Activated CD8-positive, alpha-beta memory T cell treated with anti-CD3 and anti-CD28 coated beads, Interleukin-2, amount 10 ng/mL, durations not matched to agents 7 days and 5 days (primary cell): ENCODE measurements at regions of chr4 and their contacts with region 1.

Region 1: DNA sequence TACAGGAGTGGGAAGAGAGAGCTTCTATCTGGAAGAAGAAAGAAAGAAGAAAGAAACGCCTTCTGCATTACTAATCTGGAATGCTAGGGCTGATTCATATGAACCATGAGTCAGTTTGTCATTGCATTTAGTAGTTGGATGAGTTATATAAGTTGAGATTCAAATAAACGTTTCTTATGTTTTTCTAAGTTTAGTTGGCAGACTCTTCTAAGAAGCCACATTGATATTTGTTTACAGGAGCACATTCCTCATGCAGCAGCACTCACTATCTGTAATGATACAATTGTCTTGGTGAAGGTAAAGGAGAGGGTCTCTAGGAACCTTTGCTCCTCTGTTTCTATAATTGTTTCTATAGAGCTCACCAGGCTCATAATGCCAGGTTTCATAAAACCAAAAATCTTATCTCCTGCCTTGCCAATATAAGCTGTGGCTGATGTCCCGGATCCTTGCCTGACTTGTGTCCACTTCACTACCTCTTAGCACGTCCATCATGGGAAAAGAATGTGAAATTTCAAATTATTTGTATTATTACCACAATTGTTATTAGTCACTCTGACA is 39.5 kb downstream of the HOPX start:
- DNase-seq: no peak
- ATAC-seq: peak; percentile 54
- H3K4me3 Mint-ChIP-seq: no peak overlapping the region
- H3K27ac Mint-ChIP-seq: peak overlapping the region; percentile 60
- H3K4me1 Mint-ChIP-seq: peaks cover 53% of the 10 kb centered on the region
- H3K27me3 Mint-ChIP-seq: no peaks in the 10 kb centered on the region

Region 2: DNA sequence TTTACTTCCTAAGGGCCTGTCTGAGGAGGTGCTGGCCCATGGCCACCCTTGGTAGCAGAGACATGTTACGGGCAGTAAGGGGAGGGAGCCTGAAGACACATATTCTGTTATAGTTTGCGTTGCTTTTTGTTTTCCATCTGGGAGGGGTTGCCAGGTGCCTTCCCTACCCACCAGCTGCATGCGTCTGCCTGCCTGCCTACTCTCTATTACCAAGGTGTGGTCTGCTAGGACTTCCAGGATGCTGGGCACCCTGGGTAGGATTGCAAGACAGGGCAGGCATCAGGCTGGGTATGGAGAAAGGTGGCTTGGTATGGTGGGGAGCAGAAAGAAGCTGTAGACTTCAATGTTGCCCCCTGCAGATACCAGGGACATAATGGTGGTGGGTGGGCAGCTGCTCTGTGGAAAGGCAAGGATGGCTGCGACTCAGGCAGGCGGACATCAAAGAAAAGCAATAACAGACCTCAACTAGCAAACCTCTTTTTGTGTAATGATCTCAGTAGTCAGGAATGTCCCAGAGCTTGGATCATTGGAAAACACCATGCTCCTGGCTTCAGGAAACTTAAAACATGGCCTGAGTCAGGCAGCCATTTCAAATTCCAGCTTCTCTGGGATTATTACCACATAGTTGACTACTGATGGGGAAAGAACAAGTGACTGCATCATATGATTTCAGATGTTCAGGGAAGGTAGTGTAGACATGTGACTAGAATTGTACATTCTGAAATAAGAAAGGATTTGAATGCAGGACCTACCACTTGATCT is 28.3 kb before region 1 on chr4:
- CTCF ChIA-PET with region 1: interaction called, 10 read pairs
- DNase-seq: no peak
- ATAC-seq: no peak
- H3K4me3 Mint-ChIP-seq: no peak overlapping the region
- H3K27ac Mint-ChIP-seq: no peak overlapping the region
- H3K4me1 Mint-ChIP-seq: peaks cover 11% of the 10 kb centered on the region
- H3K27me3 Mint-ChIP-seq: peaks cover 11% of the 10 kb centered on the region

Region 3: GRCh38 chr4:56626963-56627362 is 14.6 kb before region 1 on chr4:
- CTCF ChIA-PET with region 1: interaction called, 15 read pairs
- DNase-seq: no peak
- ATAC-seq: peak; percentile 52
- H3K4me3 Mint-ChIP-seq: no peak overlapping the region
- H3K27ac Mint-ChIP-seq: peak overlapping the region; percentile 67
- H3K4me1 Mint-ChIP-seq: peaks cover 25% of the 10 kb centered on the region
- H3K27me3 Mint-ChIP-seq: no peaks in the 10 kb centered on the region

Region 4: GRCh38 chr4:56655209-56655626 is 13.6 kb after region 1 on chr4:
- CTCF ChIA-PET with region 1: interaction called, 24 read pairs
- DNase-seq: peak; percentile 56
- ATAC-seq: peak; percentile 16
- H3K4me3 Mint-ChIP-seq: peak overlapping the region; percentile 99
- H3K27ac Mint-ChIP-seq: peak overlapping the region; percentile 95
- H3K4me1 Mint-ChIP-seq: peaks cover 57% of the 10 kb centered on the region
- H3K27me3 Mint-ChIP-seq: peaks cover 11% of the 10 kb centered on the region